Ovary (tissue), 10 donors: ENCODE measurements at regions of chr9 and their contacts with region 1.

Region 1: GRCh38 chr9:10612641-10613398 is at the start of gene PTPRD:
- DNase-seq: peak in 1 of 5 donors; percentile 16
- H3K4me3 ChIP-seq: no peak within 1 kb of the TSS
- H3K27ac ChIP-seq: no peak within 1 kb of the TSS
- H3K4me1 ChIP-seq: no peaks in the 10 kb centered on the region
- H3K27me3 ChIP-seq: no peaks in the 10 kb centered on the region
- CTCF ChIP-seq: no peak
- EP300 ChIP-seq: no peak
- POLR2A ChIP-seq: no peak
- total RNA-seq, gene PTPRD: 16.2 to 231 (median 100) TPM

Region 2: GRCh38 chr9:10562581-10563343 is 50.1 kb before region 1 on chr9:
- intact Hi-C with region 1: loop called in 1 of 4 experiments (anchors 10 kb)
- DNase-seq: no peak
- H3K4me3 ChIP-seq: no peak overlapping the region
- H3K27ac ChIP-seq: no peak overlapping the region
- H3K4me1 ChIP-seq: no peaks in the 10 kb centered on the region
- H3K27me3 ChIP-seq: no peaks in the 10 kb centered on the region
- CTCF ChIP-seq: no peak
- EP300 ChIP-seq: no peak
- POLR2A ChIP-seq: no peak

Region 3: GRCh38 chr9:10678790-10679189 is 66.0 kb after region 1 on chr9:
- intact Hi-C with region 1: no loop called
- DNase-seq: no peak
- H3K4me3 ChIP-seq: no peak overlapping the region
- H3K27ac ChIP-seq: no peak overlapping the region
- H3K4me1 ChIP-seq: no peaks in the 10 kb centered on the region
- H3K27me3 ChIP-seq: no peaks in the 10 kb centered on the region
- CTCF ChIP-seq: no peak
- EP300 ChIP-seq: no peak
- POLR2A ChIP-seq: no peak

Region 4: GRCh38 chr9:10704720-10705119 is 91.9 kb after region 1 on chr9:
- intact Hi-C with region 1: no loop called
- DNase-seq: no peak
- H3K4me3 ChIP-seq: no peak overlapping the region
- H3K27ac ChIP-seq: no peak overlapping the region
- H3K4me1 ChIP-seq: no peaks in the 10 kb centered on the region
- H3K27me3 ChIP-seq: no peaks in the 10 kb centered on the region
- CTCF ChIP-seq: no peak
- EP300 ChIP-seq: no peak
- POLR2A ChIP-seq: no peak

Region 5: DNA sequence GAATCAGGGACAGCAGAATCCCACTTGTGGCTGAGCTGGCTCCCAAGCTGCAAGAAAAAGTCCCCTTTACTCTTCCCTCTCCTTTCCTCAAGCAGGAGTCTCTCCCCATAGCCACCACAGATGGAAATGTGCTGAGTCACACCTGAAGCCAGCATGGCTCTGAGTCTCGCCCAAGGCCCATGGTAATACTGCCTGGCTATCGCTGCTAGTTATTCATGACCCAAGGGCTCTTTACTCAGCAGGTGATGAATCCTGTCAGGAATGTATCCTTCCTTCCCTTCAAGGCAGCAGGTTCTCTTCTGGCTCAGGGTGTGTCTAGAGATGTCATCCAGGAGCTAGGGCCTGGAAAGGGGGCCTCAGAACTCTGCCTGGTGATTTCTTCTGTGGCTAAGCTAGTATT is 403.3 kb after region 1 on chr9:
- intact Hi-C with region 1: no loop called
- DNase-seq: no peak
- H3K4me3 ChIP-seq: no peak overlapping the region
- H3K27ac ChIP-seq: no peak overlapping the region
- H3K4me1 ChIP-seq: no peaks in the 10 kb centered on the region
- H3K27me3 ChIP-seq: no peaks in the 10 kb centered on the region
- CTCF ChIP-seq: no peak
- EP300 ChIP-seq: no peak
- POLR2A ChIP-seq: no peak